Naive thymus-derived CD4-positive, alpha-beta T cell (primary cell): ENCODE measurements at regions of chr7 and their contacts with region 1.

Region 1: DNA sequence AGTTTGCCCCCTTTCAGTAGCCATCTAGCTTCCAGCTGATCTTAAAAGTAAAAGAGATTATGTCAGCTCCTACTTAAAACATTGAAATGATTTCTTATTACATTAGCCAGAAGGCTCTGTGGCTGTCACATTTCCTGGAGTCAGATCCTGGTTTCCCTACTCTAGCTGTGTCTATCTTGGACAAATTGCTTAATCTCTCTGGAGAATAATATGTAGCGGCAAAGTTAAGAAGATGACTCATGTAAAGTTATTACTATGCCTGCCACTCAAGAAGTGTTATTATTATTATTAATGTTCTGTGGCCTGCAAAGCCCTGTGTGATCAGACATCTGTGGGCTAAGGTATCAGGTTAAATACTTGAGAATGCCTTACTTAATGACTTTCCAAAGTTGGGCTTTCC is 107.2 kb downstream of the RUNDC3B start:
- DNase-seq: no peak
- ATAC-seq: no peak
- H3K4me3 ChIP-seq: no peak overlapping the region
- H3K4me3 Mint-ChIP-seq: no peak overlapping the region
- H3K27ac ChIP-seq: no peak overlapping the region
- H3K27ac Mint-ChIP-seq: no peak overlapping the region
- H3K4me1 ChIP-seq: no peaks in the 10 kb centered on the region
- H3K4me1 Mint-ChIP-seq: no peaks in the 10 kb centered on the region
- H3K27me3 ChIP-seq: no peaks in the 10 kb centered on the region
- H3K27me3 Mint-ChIP-seq: peaks cover 0 to 13% (median 3%) of the 10 kb centered on the region in 5 donors

Region 2: DNA sequence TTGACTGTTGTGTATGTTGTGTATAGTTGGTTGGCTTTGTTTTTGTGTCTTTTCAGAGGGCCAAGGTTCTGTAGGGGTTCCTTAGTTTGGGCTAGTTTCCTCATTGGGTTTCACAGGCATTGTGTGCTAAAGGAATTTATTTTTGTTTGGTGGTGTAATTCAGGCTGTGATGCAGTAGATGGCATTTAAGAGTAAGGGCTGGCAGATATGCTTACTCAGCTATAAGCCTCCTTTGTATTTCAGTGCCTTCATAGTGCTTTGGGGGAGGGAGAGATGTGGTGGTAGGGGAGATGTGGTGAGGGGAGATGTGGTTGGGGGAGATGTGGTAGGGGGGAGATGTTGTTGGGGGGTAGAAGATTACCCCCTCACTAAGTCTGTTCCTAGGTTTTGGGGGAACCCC is 49.1 kb after region 1 on chr7:
- CTCF ChIA-PET with region 1: no interaction called
- POLR2A ChIA-PET with region 1: no interaction called
- intact Hi-C with region 1: loop called in 1 of 2 experiments (anchors 1 kb)
- DNase-seq: no peak
- ATAC-seq: no peak
- H3K4me3 ChIP-seq: no peak overlapping the region
- H3K4me3 Mint-ChIP-seq: no peak overlapping the region
- H3K27ac ChIP-seq: no peak overlapping the region
- H3K27ac Mint-ChIP-seq: no peak overlapping the region
- H3K4me1 ChIP-seq: no peaks in the 10 kb centered on the region
- H3K4me1 Mint-ChIP-seq: no peaks in the 10 kb centered on the region
- H3K27me3 ChIP-seq: no peaks in the 10 kb centered on the region
- H3K27me3 Mint-ChIP-seq: peaks cover 7 to 15% (median 12%) of the 10 kb centered on the region in 5 donors